Esophagus muscularis mucosa (tissue), 4 donors: ENCODE measurements at regions of chr2 and their contacts with region 1.

Region 1: DNA sequence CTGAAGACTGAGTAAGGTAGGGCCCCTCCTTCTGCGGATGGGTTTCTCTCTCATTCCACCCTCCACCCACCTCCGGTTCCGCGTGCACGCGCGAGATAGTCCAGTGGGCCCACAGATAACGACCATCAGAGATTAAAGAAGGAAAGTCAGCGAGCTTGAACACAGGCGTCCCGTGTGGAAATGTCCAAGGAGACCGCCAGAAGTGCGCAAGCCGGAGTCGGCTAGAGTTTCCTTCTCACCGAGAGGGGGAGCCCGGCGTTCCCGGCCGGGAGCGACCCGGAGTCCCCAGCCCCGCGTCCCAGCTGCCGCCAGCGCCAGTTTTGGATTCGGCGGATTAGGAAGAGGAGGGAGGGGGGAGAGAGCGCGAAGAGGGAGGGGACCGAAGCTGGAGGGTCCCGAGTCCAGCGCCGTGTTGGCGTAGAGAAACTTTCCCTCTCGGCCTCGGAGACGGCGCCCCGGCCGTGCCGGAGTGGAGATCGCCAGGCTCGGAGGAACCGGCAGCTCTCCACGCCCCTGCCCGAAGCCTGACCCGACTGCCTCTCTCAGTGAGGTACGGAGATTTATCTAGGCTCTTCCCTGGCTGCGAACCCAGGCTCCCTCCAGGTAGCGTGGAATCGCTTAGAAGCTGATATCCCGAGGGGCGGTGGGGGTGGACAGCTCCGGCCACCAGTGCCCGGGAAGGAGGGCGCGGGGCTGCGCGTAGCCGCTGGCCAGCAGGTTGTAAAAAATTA is at the start of gene GULP1:
- DNase-seq: no peak
- H3K4me3 ChIP-seq: peak within 1 kb of the TSS; percentile 74 to 86 (median 76)
- H3K27ac ChIP-seq: peak within 1 kb of the TSS; percentile 94 to 96 (median 95)
- H3K4me1 ChIP-seq: peaks cover 5 to 41% (median 37%) of the 10 kb centered on the region in 4 donors
- H3K27me3 ChIP-seq: no peaks in the 10 kb centered on the region
- CTCF ChIP-seq: peak; percentile 39 to 78 (median 53)
- EP300 ChIP-seq: no peak
- POLR2A ChIP-seq: no peak
- total RNA-seq, gene GULP1: 27.1 to 49.0 (median 36.8) TPM

Region 2: GRCh38 chr2:188369365-188369764 is 77.6 kb after region 1 on chr2:
- intact Hi-C with region 1: loop called (anchors 2 kb)
- DNase-seq: no peak
- H3K4me3 ChIP-seq: no peak overlapping the region
- H3K27ac ChIP-seq: no peak overlapping the region
- H3K4me1 ChIP-seq: no peaks in the 10 kb centered on the region
- H3K27me3 ChIP-seq: no peaks in the 10 kb centered on the region
- CTCF ChIP-seq: peak; percentile 44 to 75 (median 67)
- EP300 ChIP-seq: no peak
- POLR2A ChIP-seq: no peak

Region 3: GRCh38 chr2:188512456-188512855 is 220.7 kb after region 1 on chr2:
- intact Hi-C with region 1: loop called (anchors 5 kb)
- DNase-seq: no peak
- H3K4me3 ChIP-seq: no peak overlapping the region
- H3K27ac ChIP-seq: no peak overlapping the region
- H3K4me1 ChIP-seq: peaks cover 0 to 5% (median 2%) of the 10 kb centered on the region in 4 donors
- H3K27me3 ChIP-seq: no peaks in the 10 kb centered on the region
- CTCF ChIP-seq: peak; percentile 48 to 53 (median 52)
- EP300 ChIP-seq: no peak
- POLR2A ChIP-seq: no peak

Region 4: GRCh38 chr2:188524519-188525113 is 232.8 kb after region 1 on chr2:
- intact Hi-C with region 1: no loop called
- DNase-seq: no peak
- H3K4me3 ChIP-seq: no peak overlapping the region
- H3K27ac ChIP-seq: no peak overlapping the region
- H3K4me1 ChIP-seq: peaks cover 1 to 42% (median 24%) of the 10 kb centered on the region in 4 donors
- H3K27me3 ChIP-seq: no peaks in the 10 kb centered on the region
- CTCF ChIP-seq: peak; percentile 81 to 85 (median 83)
- EP300 ChIP-seq: no peak
- POLR2A ChIP-seq: no peak